ENCODE measurements at regions of chr1 and their contacts with region 1.

Region 1: DNA sequence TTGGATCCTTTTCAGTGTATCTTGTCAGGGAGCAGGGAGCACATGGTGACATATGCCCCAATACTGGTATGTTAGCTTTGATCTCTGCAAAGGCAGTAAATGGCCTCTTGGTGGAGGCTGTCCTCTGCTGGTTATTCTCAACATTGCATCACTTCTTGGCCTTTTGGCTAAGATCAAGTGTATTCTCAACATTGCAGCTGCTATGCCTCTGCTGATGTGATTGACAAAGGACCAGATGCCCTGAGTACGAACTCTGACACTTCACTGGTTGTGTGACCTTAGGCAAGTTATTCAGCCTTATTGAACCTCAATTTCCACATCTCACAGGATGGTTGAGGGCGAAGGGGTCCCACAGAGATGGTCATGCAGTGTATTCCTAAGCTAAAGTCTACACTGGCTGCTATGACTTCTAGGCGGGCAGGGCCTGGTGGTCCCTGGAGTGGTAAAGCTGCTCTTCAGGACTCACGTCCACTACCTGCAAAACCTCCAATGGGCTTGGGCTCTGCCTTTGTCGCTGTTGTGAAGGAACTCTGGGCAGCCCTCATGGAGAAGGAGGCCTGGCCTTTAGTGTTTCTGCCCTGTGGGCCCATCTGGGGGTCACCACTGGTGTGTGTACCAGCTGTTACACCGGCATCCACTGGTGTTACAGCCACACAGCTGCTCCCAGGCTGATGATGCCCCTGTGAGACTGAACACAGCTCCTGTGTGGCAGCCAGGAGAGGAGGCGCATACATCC is 64.8 kb downstream of the DNTTIP2 start:
- DNase-seq: peak; percentile 61
- H3K4me3 ChIP-seq: no peak overlapping the region; a peak in 1 of 4 replicates
- H3K27ac ChIP-seq: peak overlapping the region; percentile 66 to 95
- H3K4me1 ChIP-seq: peaks cover 38 to 45% of the 10 kb centered on the region in 2 experiments
- H3K27me3 ChIP-seq: no peaks in the 10 kb centered on the region
- CTCF ChIP-seq: peak; percentile 99
- EP300 ChIP-seq: peak in 1 of 2 experiments; percentile 51; a peak in 1 of 4 replicates
- RAD21 ChIP-seq: peak; percentile 100

Region 2: GRCh38 chr1:93437976-93438605 is 376.1 kb before region 1 on chr1:
- CTCF ChIA-PET with region 1: interaction called, 16 read pairs
- POLR2A ChIA-PET with region 1: no interaction called
- DNase-seq: peak; percentile 63
- H3K4me3 ChIP-seq: no peak overlapping the region; a peak in 1 of 4 replicates
- H3K27ac ChIP-seq: no peak overlapping the region
- H3K4me1 ChIP-seq: peaks cover 0 to 6% of the 10 kb centered on the region in 2 experiments; a peak in 2 of 4 replicates
- H3K27me3 ChIP-seq: no peaks in the 10 kb centered on the region
- CTCF ChIP-seq: peak; percentile 82
- EP300 ChIP-seq: no peak
- RAD21 ChIP-seq: peak; percentile 88

Region 3: DNA sequence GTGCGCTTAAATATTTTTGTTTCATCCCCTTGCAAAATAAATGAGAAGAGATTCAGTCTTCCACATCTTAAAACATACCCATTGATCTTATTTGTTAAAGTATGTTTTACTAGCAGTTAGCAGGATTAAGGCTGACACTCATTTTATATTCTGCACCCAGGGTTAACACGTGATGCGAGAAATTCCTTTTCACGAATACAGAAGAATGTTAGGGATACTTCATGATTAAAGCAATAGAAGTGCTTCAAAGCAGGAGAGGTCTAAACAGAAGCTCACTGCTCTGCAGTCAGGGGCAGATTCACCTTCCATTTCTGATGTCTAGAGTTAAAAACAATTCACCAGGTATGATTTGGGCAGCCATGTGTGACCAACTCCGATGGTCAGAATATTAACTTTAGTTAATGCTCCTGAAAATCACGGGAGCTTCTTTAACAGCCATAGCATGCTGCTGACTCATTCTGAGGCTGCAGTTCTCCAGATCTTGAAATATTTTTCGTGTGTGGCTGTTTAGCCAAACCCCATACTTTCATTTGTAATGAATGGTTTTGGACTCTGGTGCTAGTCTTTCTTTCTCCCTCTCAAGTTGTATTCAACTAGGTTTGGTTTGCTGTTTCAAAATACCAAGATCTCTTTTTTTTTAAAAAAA is 152.3 kb before region 1 on chr1:
- CTCF ChIA-PET with region 1: interaction called, 18 read pairs
- POLR2A ChIA-PET with region 1: no interaction called
- DNase-seq: no peak
- H3K4me3 ChIP-seq: peak overlapping the region in 1 of 2 experiments; percentile 2; a peak in 1 of 4 replicates
- H3K27ac ChIP-seq: peak overlapping the region; percentile 94 to 99
- H3K4me1 ChIP-seq: peaks cover 44 to 49% of the 10 kb centered on the region in 2 experiments
- H3K27me3 ChIP-seq: no peaks in the 10 kb centered on the region
- CTCF ChIP-seq: no peak
- EP300 ChIP-seq: peak in 1 of 2 experiments; percentile 53; a peak in 1 of 4 replicates
- RAD21 ChIP-seq: no peak

Region 4: DNA sequence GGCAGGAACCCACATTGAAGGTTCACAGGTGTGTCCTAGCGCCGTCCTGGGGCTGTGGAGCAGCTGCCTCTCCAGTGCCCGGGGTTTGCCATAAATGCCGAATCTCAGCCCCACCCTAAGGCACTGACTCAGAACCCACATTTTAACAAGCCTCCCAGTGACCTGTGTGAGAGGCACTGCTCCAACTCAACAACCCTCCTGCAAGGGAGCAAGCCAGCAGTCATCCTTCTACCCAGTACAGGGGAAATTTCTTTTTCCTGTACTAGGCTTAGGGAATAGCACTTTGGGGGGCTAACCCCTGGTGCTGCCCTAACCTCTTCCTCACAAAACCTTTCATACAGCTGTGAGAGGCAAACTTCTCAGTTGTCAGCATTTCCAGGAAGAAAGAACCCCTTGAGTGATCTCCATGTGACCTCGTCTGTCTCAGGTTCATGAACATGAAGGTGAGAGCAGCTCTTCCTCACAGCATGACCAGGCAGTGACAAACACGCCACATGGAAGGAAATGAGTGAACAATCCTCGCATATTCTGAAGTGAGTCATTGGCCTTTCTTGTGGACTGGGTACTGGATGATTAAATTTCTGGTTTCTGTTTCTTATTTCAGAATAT is 121.1 kb before region 1 on chr1:
- CTCF ChIA-PET with region 1: interaction called, 13 read pairs
- POLR2A ChIA-PET with region 1: no interaction called
- DNase-seq: no peak
- H3K4me3 ChIP-seq: no peak overlapping the region
- H3K27ac ChIP-seq: peak overlapping the region; percentile 35 to 94
- H3K4me1 ChIP-seq: peaks cover 20 to 54% of the 10 kb centered on the region in 2 experiments; a peak in 3 of 4 replicates
- H3K27me3 ChIP-seq: no peaks in the 10 kb centered on the region
- CTCF ChIP-seq: no peak
- EP300 ChIP-seq: peak in 1 of 2 experiments; percentile 91; a peak in 2 of 4 replicates
- RAD21 ChIP-seq: no peak

Region 5: GRCh38 chr1:93740601-93741031 is 73.6 kb before region 1 on chr1:
- CTCF ChIA-PET with region 1: interaction called, 18 read pairs
- POLR2A ChIA-PET with region 1: no interaction called
- DNase-seq: peak; percentile 55
- H3K4me3 ChIP-seq: no peak overlapping the region
- H3K27ac ChIP-seq: peak overlapping the region; percentile 3 to 87; a peak in 2 of 4 replicates
- H3K4me1 ChIP-seq: peaks cover 12 to 22% of the 10 kb centered on the region in 2 experiments
- H3K27me3 ChIP-seq: no peaks in the 10 kb centered on the region
- CTCF ChIP-seq: no peak
- EP300 ChIP-seq: no peak
- RAD21 ChIP-seq: no peak

Region 6: DNA sequence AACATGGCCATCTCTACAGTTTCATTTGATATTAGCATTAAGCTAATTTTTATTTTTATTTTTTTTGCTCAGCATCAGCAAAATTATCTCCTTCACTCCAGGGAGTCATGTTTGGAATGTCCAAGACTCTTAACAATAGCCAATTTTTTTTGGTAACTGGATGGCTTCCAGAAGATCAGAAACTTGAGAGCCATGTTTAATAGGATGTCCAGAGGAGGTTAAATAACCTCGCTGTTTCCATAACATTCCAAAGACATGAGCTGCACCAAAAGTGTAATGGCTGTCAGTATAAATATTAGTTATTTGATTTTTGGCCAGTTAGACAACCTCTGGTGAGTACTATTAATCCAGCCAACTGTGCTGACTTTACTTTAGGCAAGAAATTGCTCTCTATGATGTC is 15.9 kb before region 1 on chr1:
- CTCF ChIA-PET with region 1: interaction called, 14 read pairs
- POLR2A ChIA-PET with region 1: no interaction called
- DNase-seq: no peak
- H3K4me3 ChIP-seq: no peak overlapping the region
- H3K27ac ChIP-seq: peak overlapping the region in 1 of 2 experiments; percentile 85; a peak in 3 of 4 replicates
- H3K4me1 ChIP-seq: peaks cover 0 to 20% of the 10 kb centered on the region in 2 experiments; a peak in 3 of 4 replicates
- H3K27me3 ChIP-seq: no peaks in the 10 kb centered on the region
- CTCF ChIP-seq: no peak
- EP300 ChIP-seq: peak; percentile 9 to 96; a peak in 2 of 4 replicates
- RAD21 ChIP-seq: no peak

Region 7: DNA sequence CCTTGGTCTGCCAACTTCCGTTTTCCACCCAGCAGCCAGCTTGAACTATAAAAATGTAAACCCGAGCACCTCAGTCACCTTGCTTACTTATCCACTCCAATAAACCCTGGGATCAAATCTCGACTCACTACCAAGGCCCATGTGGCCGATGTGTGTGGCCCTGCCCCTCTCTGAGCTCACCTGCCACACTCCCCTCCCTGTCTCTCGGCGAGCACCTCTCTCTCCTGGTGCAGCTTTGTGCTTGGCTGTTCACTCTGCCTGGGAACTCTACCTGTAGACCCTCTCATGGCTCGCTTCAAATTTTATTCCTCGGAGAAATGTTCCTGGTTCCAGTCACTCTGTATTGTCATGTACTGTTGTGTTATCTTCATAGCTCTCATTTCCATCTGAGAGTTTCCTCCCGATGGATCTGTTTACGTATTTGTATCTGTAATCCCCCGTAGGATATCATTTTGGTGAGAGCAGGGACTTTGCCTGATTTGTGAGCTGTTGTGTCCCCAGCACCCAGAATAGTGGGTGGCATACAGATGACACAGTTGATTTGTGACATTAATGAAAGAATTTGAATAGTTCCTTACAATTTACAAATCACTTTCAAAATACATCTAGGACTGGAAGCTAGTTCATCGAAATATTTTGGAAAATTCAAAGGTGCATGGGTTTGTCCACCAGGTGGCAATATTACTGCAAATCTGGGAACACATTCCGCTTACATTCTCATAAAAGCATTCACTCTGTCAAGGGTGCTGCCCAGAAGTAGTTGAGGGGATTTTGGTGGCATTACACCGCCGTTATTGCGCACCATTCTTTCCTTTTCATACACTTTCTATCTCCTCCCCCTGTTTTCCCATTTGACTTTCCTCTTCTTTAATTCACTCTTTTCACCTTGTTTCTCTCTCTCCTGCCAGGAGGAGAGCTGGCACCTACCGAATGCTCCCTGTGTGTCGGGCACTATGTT is 211.4 kb after region 1 on chr1:
- CTCF ChIA-PET with region 1: no interaction called
- POLR2A ChIA-PET with region 1: no interaction called
- DNase-seq: peak; percentile 74
- H3K4me3 ChIP-seq: no peak overlapping the region; a peak in 1 of 4 replicates
- H3K27ac ChIP-seq: no peak overlapping the region
- H3K4me1 ChIP-seq: peaks cover 0 to 8% of the 10 kb centered on the region in 2 experiments; a peak in 1 of 4 replicates
- H3K27me3 ChIP-seq: no peaks in the 10 kb centered on the region
- CTCF ChIP-seq: peak; percentile 85
- EP300 ChIP-seq: no peak
- RAD21 ChIP-seq: peak; percentile 86

Region 8: GRCh38 chr1:94270801-94271203 is 456.6 kb after region 1 on chr1:
- CTCF ChIA-PET with region 1: no interaction called
- POLR2A ChIA-PET with region 1: no interaction called
- DNase-seq: no peak
- H3K4me3 ChIP-seq: no peak overlapping the region
- H3K27ac ChIP-seq: peak overlapping the region in 1 of 2 experiments; percentile 58; a peak in 2 of 4 replicates
- H3K4me1 ChIP-seq: peaks cover 3 to 12% of the 10 kb centered on the region in 2 experiments
- H3K27me3 ChIP-seq: no peaks in the 10 kb centered on the region
- CTCF ChIP-seq: no peak
- EP300 ChIP-seq: peak in 1 of 2 experiments; percentile 92; a peak in 2 of 4 replicates
- RAD21 ChIP-seq: no peak

Measured in SK-N-SH (cell line).